Dendritic cell treated with granulocyte-macrophage colony-stimulating factor and Interleukin-4, amounts not matched to agents 40 ng/mL and 50 ng/mL, for 4 days (primary cell): ENCODE measurements at regions of chr14 and their contacts with region 1.

Region 1: GRCh38 chr14:50311975-50312733 is at the starts of genes DMAC2L and L2HGDH:
- H3K4me3 Mint-ChIP-seq: peak within 1 kb of the TSS; percentile 94
- H3K27ac Mint-ChIP-seq: peak within 1 kb of the TSS; percentile 95
- H3K4me1 Mint-ChIP-seq: peaks cover 27% of the 10 kb centered on the region
- H3K27me3 Mint-ChIP-seq: no peaks in the 10 kb centered on the region

Region 2: GRCh38 chr14:49767562-49768300 is 544.4 kb before region 1 on chr14 and contains the start of gene KLHDC2:
- intact Hi-C with region 1: loop called (anchors 5 kb)
- H3K4me3 Mint-ChIP-seq: peak within 1 kb of the TSS; percentile 89
- H3K27ac Mint-ChIP-seq: peak within 1 kb of the TSS; percentile 95
- H3K4me1 Mint-ChIP-seq: peaks cover 33% of the 10 kb centered on the region
- H3K27me3 Mint-ChIP-seq: no peaks in the 10 kb centered on the region

Region 3: GRCh38 chr14:50231475-50232275 is 80.5 kb before region 1 on chr14 and contains the start of gene SOS2:
- intact Hi-C with region 1: loop called (anchors 1 kb)
- H3K4me3 Mint-ChIP-seq: peak within 1 kb of the TSS; percentile 86
- H3K27ac Mint-ChIP-seq: peak within 1 kb of the TSS; percentile 91
- H3K4me1 Mint-ChIP-seq: peaks cover 25% of the 10 kb centered on the region
- H3K27me3 Mint-ChIP-seq: no peaks in the 10 kb centered on the region

Region 4: GRCh38 chr14:50532502-50533240 is 220.5 kb after region 1 on chr14 and contains the start of gene MAP4K5:
- intact Hi-C with region 1: loop called (anchors 2 kb)
- H3K4me3 Mint-ChIP-seq: peak within 1 kb of the TSS; percentile 87
- H3K27ac Mint-ChIP-seq: peak within 1 kb of the TSS; percentile 66
- H3K4me1 Mint-ChIP-seq: peaks cover 53% of the 10 kb centered on the region
- H3K27me3 Mint-ChIP-seq: no peaks in the 10 kb centered on the region